Activated CD4-positive, alpha-beta T cell treated with anti-CD3 and anti-CD28 coated beads, Interleukin-2, amount 10 ng/mL, durations not matched to agents 24 days and 14 days (primary cell): ENCODE measurements at regions of chr2 and their contacts with region 1.

Region 1: GRCh38 chr2:68925295-68925896 is 27.3 kb downstream of the GKN2 start:
- DNase-seq: peak; percentile 90
- H3K4me3 Mint-ChIP-seq: no peak overlapping the region
- H3K27ac Mint-ChIP-seq: no peak overlapping the region
- H3K4me1 Mint-ChIP-seq: peaks cover 4% of the 10 kb centered on the region
- H3K27me3 Mint-ChIP-seq: peaks cover 9% of the 10 kb centered on the region

Region 2: GRCh38 chr2:68487773-68488355 is 437.5 kb before region 1 on chr2:
- intact Hi-C with region 1: loop called (anchors 1 kb)
- DNase-seq: no peak
- H3K4me3 Mint-ChIP-seq: no peak overlapping the region
- H3K27ac Mint-ChIP-seq: no peak overlapping the region
- H3K4me1 Mint-ChIP-seq: peaks cover 2% of the 10 kb centered on the region
- H3K27me3 Mint-ChIP-seq: peaks cover 3% of the 10 kb centered on the region

Region 3: DNA sequence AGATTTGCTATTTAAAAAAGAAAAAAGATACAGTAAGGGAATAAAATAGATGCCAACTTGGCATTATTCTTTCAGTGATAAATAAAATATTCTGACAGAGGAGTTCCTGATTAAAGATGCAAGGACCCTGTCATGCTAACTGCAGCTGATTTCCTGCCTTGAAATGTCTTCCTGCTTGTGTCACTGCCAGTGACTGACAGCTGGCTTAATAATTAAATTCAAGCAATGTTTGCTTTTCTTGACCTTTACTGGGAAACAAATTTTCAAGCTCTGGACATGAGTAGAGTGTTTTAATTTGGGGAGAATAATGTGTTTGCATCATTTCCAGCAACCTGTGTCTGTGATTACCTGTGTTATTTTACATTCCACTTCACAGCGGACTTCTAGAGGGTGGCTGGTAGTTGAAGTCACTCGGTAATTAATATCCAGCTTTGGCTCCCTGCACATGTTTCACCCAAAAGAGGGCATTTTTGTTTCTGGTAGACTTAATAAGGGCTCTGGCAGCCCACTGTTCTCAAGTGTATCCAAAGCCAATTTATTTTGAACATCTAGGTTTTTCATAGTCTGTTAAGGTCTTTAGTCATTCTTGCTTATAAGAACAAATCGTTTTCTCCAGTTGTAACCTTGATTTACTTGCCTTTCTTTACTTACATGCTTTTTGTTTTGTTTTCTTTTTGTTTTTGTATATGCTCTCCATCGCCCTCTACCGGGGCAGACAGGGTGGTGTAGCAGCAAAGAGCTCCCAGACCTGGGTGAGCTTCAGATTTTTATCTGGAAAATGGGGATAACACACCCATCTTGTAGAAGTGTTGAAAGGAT is 330.5 kb before region 1 on chr2:
- intact Hi-C with region 1: loop called (anchors 5 kb)
- DNase-seq: peak; percentile 86
- H3K4me3 Mint-ChIP-seq: no peak overlapping the region
- H3K27ac Mint-ChIP-seq: peak overlapping the region; percentile 31
- H3K4me1 Mint-ChIP-seq: peaks cover 7% of the 10 kb centered on the region
- H3K27me3 Mint-ChIP-seq: peaks cover 18% of the 10 kb centered on the region

Region 4: GRCh38 chr2:68709421-68709911 is 215.9 kb before region 1 on chr2:
- intact Hi-C with region 1: loop called (anchors 1 kb)
- DNase-seq: peak; percentile 74
- H3K4me3 Mint-ChIP-seq: peak overlapping the region; percentile 11
- H3K27ac Mint-ChIP-seq: peak overlapping the region; percentile 64
- H3K4me1 Mint-ChIP-seq: peaks cover 29% of the 10 kb centered on the region
- H3K27me3 Mint-ChIP-seq: peaks cover 4% of the 10 kb centered on the region

Region 5: DNA sequence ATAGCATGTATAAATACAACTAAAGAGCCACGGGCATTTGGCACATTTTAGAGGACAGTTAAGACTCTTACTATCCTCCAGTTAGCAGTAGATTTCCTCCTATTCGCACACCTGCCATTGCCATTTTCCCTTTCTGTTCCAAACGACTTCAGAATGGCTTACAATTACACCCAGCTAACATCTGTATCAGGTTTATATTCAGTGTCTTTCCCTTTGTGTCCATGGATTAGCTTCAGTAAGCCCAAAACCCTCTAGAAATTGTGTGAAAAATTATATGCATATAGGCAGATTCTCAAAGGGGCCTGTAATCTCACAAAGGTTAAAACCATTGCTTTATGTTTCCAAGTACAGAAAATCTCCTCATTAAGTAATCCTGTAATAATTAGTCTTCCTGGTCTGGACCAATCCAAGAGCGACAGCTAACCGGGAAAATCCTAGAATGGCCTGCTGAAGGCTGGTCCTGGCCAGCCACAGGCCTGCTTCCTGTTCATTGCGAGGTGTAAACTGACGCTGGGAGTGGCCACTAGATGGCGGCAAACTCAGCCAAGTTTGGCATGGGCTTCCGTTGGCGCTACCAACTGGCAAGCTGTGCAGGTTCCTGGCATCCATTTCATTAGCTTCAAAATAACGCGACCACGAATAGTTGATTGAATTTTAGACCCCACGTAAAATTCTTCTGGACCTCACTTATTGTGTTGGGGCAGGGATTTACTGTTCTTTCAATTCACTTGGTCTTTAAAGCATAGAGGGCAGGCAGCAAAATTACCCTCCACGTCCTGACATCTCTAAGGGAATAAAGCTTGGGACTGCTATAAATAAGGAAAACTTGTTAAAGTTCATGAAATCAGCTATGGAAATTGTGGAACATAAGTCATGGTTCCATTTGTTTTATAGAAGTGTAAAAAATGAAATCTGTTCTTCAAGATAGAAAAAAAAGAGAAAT is 173.7 kb before region 1 on chr2:
- intact Hi-C with region 1: loop called (anchors 1 kb)
- DNase-seq: peak; percentile 96
- H3K4me3 Mint-ChIP-seq: peak overlapping the region; percentile 23
- H3K27ac Mint-ChIP-seq: peak overlapping the region; percentile 83
- H3K4me1 Mint-ChIP-seq: peaks cover 73% of the 10 kb centered on the region
- H3K27me3 Mint-ChIP-seq: no peaks in the 10 kb centered on the region

Region 6: DNA sequence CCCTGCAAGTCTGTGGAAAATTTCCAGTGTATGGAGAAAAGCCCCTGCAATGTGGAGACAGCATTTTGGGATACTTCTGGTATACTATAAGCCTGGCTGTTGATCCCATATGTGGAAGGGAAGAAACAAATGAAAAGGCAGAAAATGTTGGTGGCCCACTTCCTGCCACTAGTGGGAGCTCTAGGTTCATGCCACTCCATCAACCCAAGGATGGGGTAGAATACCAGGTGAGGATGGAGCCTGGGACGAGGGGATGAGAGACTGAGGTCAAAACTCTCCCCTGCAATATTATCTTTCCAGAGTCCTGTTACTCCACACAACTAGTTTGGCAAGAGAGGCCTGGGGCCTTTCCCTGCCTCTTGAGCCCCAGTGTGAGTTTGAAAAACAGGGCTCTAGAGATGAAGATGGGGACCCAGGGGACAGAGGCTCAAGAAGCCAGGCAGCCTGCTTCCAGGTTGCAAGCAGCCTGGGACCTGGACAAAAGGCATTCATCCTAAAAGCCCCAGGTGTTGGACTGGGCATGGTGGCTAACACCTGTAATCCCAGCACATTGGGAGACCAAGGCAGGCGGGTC is 86.0 kb before region 1 on chr2:
- intact Hi-C with region 1: loop called (anchors 2 kb)
- DNase-seq: peak; percentile 71
- H3K4me3 Mint-ChIP-seq: no peak overlapping the region
- H3K27ac Mint-ChIP-seq: no peak overlapping the region
- H3K4me1 Mint-ChIP-seq: peaks cover 30% of the 10 kb centered on the region
- H3K27me3 Mint-ChIP-seq: peaks cover 12% of the 10 kb centered on the region